HEK293 (cell line): ENCODE measurements at regions of chr15 and their contacts with region 1.

Region 1: GRCh38 chr15:83446904-83447709 is at the start of gene SH3GL3:
- H3K4me3 ChIP-seq: peak within 1 kb of the TSS; percentile 79
- H3K27ac ChIP-seq: peak within 1 kb of the TSS; percentile 73
- H3K4me1 ChIP-seq: peaks cover 20% of the 10 kb centered on the region
- CTCF ChIP-seq: peak; percentile 91

Region 2: GRCh38 chr15:83430441-83430840 is 16.7 kb before region 1 on chr15:
- CTCF ChIA-PET with region 1: interaction called, 45 read pairs
- POLR2A ChIA-PET with region 1: no interaction called
- H3K4me3 ChIP-seq: no peak overlapping the region
- H3K27ac ChIP-seq: no peak overlapping the region
- H3K4me1 ChIP-seq: no peaks in the 10 kb centered on the region
- CTCF ChIP-seq: no peak

Region 3: DNA sequence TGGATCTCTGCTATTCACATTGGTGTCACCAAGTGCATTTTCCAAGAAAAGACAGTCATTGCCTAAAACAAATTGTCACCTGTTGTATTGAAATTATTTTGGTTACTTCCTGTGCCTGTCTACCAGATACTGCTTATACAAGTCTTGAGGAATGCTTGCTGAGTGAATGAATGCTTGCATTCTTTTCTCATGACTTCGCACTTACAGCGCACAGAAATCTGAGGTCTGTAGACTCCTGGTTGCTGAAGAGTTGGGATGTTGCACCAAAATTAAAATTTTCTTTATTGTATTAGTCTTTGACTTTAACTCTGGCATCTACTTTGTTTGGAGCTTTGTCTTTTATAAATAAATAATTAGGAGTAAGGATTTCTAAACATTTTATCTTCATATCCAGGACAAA is 28.4 kb after region 1 on chr15:
- CTCF ChIA-PET with region 1: interaction called, 13 read pairs
- POLR2A ChIA-PET with region 1: interaction called, 4 read pairs
- H3K4me3 ChIP-seq: no peak overlapping the region
- H3K27ac ChIP-seq: no peak overlapping the region
- H3K4me1 ChIP-seq: peaks cover 6% of the 10 kb centered on the region
- CTCF ChIP-seq: no peak

Region 4: DNA sequence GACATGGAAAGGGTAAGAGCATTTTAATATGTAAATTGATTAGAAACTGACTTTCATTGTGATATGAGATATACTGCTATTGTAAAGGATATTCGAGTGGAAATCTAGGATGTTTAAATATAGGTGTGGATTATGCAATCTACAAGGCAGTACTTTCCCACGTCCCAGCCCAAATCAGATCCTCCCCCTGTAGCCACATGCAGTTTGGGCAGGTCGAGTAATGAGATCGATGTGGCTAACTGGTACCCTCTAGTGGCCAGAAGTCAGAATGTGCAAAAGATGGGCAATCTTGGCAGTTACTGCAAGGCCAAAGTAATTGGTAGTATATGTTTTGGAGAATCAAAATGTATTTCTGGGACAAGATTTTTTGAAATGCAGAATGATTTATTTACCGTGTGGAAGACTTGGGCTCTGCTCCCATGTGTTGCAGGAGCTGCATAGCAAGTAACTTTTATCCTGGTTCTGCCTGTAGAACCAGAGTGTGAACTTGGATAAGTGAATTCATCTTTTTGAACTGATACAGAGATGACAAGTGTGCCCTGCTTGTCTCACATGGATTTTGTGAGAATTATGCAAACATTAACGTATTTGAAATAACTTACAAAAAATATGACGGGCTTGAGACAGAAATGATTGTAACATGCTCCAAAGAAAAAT is 112.3 kb after region 1 on chr15:
- CTCF ChIA-PET with region 1: interaction called, 168 read pairs
- POLR2A ChIA-PET with region 1: interaction called, 3 read pairs
- H3K4me3 ChIP-seq: no peak overlapping the region
- H3K27ac ChIP-seq: no peak overlapping the region
- H3K4me1 ChIP-seq: no peaks in the 10 kb centered on the region
- CTCF ChIP-seq: peak; percentile 69; the same call in 1 of the 2 replicates

Region 5: DNA sequence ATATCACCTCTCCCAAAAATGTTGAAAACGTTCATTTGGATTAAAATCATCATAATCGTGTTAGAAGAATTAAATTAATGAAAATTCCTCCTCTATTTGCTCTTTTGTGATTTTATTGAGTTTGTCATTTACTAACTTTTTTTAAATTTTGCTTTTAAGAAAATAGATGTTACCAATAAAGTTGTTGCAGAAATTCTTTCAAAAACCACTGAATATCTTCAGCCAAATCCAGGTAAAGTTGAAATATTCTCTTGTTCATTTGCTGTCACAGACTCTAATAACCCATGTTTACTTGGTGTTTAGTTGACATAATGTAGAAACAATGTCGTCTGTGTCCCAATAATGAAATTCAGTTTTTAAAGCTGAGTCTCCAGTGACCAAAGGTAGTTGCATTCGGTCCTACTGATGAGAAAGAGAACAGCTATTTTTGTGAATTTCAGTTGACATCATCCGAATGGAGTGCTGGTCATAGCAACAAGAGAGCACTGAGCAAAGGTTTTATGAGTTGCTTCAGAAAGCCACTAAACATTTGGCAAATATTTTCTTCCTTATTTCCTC is 117.9 kb after region 1 on chr15:
- CTCF ChIA-PET with region 1: interaction called, 168 read pairs
- POLR2A ChIA-PET with region 1: interaction called, 3 read pairs
- H3K4me3 ChIP-seq: no peak overlapping the region
- H3K27ac ChIP-seq: no peak overlapping the region
- H3K4me1 ChIP-seq: no peaks in the 10 kb centered on the region
- CTCF ChIP-seq: no peak

Region 6: GRCh38 chr15:83571820-83572707 is 125.0 kb after region 1 on chr15:
- CTCF ChIA-PET with region 1: interaction called, 20 read pairs
- POLR2A ChIA-PET with region 1: no interaction called
- H3K4me3 ChIP-seq: no peak overlapping the region
- H3K27ac ChIP-seq: no peak overlapping the region
- H3K4me1 ChIP-seq: no peaks in the 10 kb centered on the region
- CTCF ChIP-seq: no peak